ENCODE measurements at regions of chr7 and their contacts with region 1.

Region 1: GRCh38 chr7:55641273-55641691 is 69.0 kb upstream of the VOPP1 start:
- DNase-seq: no peak
- ATAC-seq: peak; percentile 93

Region 2: GRCh38 chr7:55065079-55065478 is 576.2 kb before region 1 on chr7:
- intact Hi-C with region 1: no loop called
- DNase-seq: no peak
- ATAC-seq: peak; percentile 67

Region 3: DNA sequence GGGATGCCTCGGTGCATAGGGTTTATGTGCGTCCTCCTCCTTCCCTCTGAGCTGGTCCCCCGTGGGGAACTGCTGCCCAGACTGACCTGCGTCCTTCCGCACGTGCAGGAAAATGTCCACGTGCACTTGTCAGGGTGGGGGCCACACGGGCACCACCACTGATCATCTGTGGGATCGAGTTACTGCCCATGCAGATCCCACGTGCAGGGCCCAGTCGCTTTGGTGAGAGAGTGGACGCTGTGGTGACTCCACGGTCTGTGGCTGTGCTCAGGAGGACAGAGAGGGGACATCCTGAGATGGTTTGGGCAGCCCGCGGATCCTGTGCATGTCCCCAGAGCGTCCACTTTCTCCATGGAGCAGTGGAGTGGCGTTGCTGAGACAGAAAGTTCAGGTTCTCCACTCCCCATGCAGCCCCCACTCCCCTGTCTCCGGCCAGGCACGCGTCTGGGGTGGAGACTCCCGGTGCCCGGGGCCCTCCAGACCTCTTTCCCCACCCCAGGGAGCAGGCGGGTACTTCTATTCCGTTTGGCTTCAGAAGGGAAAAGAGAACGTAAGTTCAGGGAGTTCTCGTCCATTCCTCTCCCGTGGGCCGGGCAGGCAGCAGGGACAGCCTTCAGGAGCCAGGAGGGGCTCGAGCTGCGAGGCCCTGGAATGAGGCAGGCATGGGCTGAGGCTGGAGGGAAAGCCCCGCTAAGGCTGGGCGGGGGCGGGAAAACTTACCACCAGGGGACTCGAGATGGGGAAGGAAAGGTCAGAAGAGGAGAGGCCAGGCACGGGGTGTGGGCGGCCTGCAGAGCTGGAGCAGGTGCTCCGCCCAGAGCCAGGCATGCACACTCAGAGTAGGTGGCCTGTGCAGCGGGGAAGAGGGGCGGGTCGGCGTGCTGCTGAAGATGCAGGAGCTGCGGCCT is 562.6 kb before region 1 on chr7:
- intact Hi-C with region 1: no loop called
- DNase-seq: no peak
- ATAC-seq: no peak

Region 4: GRCh38 chr7:55409482-55410225 is 231.6 kb before region 1 on chr7:
- intact Hi-C with region 1: no loop called
- DNase-seq: no peak
- ATAC-seq: no peak

Region 5: DNA sequence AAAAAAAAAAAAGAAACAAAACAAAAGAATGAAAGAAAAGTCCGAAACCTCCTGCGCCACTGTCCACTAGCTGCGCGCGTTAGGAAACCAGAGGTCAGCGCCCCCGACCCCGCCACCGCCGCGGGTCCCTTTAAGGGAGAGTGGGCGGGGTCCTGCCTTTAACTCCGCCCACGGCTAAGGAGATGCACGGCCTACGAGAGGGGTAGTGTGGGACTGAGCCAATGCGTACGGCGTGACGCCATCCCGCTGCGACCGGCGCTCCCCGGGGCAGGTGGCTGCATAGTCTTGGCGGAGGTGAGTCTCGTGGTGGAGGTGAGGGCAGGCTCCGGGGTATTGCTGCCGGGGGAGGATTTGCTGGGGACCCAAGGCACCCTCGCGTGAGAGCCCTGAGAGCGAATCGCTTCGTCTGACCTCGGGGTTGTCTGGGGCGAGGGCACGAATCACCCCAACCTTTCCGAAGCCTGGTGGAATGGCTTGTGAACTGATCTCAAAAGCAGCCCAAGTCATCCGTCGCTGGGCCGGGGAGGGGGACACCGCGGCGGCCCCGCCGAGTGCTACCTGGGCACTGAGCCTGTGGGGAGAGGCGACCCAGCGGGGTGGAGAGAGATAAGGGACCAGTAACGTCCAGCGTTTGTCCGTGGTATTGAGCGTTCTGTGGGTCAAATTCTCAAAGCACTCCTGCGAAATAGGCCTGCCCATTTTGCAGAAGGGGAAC is 310.5 kb after region 1 on chr7 and contains the start of gene MRPS17:
- intact Hi-C with region 1: loop called (anchors 5 kb)
- DNase-seq: peak; percentile 96
- ATAC-seq: peak; percentile 100
- total RNA-seq, gene MRPS17: 20.8 TPM

Region 6: DNA sequence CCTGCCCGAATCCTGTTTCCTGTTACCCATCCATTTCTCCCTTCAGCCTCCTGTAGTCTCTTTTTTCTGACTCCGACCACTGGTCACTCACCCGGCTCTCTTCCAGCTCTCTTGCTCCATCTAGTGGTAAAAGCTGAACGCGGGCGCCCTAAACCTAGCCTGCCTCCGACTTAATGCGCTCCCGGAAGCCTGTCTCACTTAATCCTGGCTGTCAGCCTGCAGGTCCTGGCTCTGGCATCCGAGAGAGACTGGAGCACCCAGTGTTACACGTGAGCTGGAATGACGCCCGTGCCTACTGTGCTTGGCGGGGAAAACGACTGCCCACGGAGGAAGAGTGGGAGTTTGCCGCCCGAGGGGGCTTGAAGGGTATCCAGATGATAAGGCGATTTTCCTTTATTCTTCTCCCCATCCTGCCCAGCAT is 433.1 kb after region 1 on chr7:
- intact Hi-C with region 1: loop called (anchors 1 kb)
- DNase-seq: peak; percentile 93
- ATAC-seq: peak; percentile 91

Measured in Right ventricle myocardium inferior (tissue), 1 donor.